GM18951 (cell line): ENCODE measurements at regions of chr3 and their contacts with region 1.

Region 1: GRCh38 chr3:50591196-50591741 is 20.3 kb downstream of the CISH start:
- POLR2A ChIP-seq: no peak

Region 2: GRCh38 chr3:49972656-49973055 is 618.6 kb before region 1 on chr3:
- in situ Hi-C with region 1: loop called (anchors 10 kb)
- POLR2A ChIP-seq: no peak